OCI-LY7 (cell line): ENCODE measurements at regions of chr5 and their contacts with region 1.

Region 1: DNA sequence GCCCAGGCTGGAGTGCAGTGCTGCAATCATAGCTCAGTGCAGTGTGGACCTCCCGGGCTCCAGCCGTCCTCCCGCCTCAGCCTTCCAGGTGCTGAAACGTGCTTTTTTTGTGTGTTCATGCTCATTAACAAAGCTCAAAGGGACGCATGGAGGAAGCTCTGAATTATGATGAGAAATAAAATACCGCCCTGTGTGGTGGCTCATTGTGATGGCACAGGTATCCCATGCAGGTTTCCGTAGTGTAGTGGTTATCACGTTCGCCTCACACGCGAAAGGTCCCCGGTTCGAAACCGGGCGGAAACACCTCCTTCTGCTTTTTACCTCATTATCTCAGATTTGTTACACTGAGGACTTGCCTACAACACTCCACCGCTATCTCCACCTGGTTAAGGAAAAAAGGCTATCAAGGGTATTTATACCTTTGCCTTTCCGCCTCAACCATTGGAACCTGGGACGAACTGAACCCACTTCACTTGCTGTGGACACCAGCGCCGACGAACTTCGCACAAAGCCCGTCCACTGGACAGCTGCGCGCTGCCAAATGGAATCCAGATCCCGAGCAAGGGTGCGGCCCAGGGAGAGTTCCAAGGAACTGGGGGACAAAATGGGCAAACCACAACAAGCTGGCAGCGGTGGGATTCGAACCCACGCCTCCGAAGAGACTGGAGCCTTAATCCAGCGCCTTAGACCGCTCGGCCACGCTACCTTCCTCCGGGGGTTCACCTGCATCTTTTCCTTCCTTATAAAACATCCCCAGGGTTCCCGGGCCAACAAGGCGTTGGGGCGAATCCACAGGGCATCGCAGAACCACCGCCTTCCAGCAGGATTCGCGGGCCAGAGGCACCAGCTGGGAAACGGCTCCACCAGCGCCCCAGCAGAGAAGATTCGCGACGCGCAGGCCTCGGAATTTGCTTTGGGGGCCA is 26.3 kb downstream of the OR2V2 start:
- DNase-seq: peak; percentile 91
- H3K4me3 ChIP-seq: peak overlapping the region; percentile 74
- H3K27ac ChIP-seq: peak overlapping the region; percentile 88
- H3K4me1 ChIP-seq: peaks cover 39% of the 10 kb centered on the region
- CTCF ChIP-seq: peak; percentile 64; the same call in 1 of the 2 replicates

Region 2: DNA sequence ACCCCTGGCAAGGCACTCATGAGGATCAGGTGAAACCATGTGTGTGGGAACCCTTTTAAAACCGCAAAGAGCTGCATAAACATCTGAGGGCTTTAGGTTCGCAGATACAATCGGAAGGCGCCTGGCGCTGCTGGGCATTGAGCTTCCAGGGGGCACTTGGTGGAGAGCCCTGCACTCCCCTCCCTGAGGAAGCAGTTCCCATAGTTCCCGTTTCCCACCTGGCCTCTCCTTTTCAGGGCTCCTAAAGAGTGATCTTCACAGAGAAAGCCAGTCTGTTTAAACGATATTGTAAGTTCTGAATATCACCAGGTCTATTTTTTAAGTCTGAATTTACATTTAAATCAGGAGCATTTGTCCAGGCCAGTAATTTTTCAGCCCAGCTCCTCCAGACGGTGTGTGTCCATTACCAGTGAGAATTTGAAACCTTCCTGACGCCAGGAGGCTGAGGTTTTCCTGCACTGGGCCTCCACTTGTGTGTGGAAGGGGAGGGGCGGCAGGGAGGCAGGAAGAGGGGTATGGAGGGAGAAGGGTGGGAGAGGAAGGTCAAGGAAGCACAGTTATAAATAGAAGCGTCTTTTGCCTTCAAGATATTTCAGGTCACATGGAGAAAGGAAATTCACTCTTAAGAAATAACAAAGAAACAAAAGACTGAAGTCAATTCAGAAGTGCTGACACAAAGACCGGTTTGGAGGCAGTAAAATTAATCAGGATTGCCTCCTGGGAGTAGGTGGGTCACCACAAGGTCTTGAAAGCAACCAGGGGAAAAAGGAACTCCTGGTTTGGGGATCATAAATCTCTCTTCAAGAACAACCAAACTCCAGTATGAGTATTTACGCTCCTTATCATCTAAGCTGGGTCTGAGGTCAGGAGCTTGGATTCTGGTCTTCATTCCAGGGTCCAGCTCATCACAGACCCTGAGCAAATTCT is 356.8 kb before region 1 on chr5:
- CTCF ChIA-PET with region 1: no interaction called
- POLR2A ChIA-PET with region 1: interaction called, 4 read pairs
- intact Hi-C with region 1: loop called (anchors 5 kb)
- DNase-seq: no peak
- H3K4me3 ChIP-seq: peak overlapping the region; percentile 44
- H3K27ac ChIP-seq: peak overlapping the region; percentile 79
- H3K4me1 ChIP-seq: peaks cover 98% of the 10 kb centered on the region
- CTCF ChIP-seq: no peak

Region 3: DNA sequence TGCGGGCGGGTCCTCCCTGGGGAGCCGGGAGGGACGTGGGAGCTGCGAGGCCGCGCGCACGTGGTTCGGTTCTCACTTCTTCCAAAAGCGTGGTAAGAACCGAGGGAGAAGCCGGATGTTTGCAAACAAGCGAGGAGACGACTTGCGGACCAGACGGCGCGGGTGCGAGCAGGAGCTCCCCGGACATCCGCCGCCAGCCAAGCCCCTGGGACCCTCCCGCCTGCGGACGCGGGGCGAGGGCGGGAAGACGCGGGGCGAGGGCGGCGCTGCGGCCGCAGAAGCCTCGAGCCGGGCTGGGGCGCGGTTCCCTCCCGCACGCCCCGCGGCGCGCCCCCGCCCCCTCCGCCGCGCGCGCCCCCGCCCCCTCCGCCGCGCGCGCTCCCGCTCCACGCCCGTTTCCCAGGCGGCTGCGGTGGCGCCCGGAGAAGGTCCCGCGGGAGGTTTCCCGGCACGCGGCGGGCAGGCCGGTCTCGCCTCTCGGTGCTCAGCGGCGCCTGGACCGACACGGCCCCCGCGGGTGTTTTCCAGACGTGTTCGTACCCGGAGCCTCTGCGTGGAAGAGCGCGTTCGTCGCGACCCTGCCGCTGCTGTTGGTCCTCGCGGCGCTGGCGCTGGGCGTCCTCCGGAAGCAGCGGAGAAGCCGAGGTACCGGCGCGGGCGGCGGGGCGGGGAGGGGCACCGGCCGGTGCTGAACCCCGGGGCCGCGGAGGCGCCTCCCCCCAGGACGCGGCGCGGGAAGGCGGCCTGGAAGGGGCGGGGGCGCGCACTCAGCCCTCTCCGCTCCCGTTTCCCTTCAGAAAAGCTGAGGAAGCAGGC is 120.8 kb before region 1 on chr5:
- CTCF ChIA-PET with region 1: no interaction called
- POLR2A ChIA-PET with region 1: no interaction called
- intact Hi-C with region 1: loop called (anchors 2 kb)
- DNase-seq: peak; percentile 86
- H3K4me3 ChIP-seq: peak overlapping the region; percentile 84
- H3K27ac ChIP-seq: peak overlapping the region; percentile 99
- H3K4me1 ChIP-seq: peaks cover 76% of the 10 kb centered on the region
- CTCF ChIP-seq: no peak

Region 4: DNA sequence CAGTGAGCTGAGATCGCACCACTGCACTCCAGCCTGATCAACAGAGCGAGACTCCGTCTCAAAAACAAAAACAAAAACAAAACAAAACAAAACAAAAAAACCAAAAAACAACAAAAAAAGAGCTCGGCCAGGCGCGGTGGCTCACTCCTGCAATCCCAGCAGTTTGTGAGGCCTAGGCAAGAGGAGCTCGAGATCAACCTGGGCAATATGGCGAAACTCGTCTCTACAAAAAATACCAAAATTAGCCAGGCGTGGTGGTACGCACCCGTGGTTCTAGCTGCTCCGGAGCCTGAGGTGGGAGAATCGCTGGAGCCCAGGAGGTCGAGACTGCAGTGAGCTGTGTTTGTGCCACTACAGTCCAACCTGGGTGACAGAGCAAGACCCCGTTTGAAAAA is 11.2 kb after region 1 on chr5:
- CTCF ChIA-PET with region 1: interaction called, 6 read pairs
- POLR2A ChIA-PET with region 1: interaction called, 13 read pairs
- intact Hi-C with region 1: loop called (anchors 1 kb)
- DNase-seq: no peak
- H3K4me3 ChIP-seq: peak overlapping the region; percentile 70
- H3K27ac ChIP-seq: peak overlapping the region; percentile 70
- H3K4me1 ChIP-seq: peaks cover 38% of the 10 kb centered on the region
- CTCF ChIP-seq: no peak